Naive thymus-derived CD4-positive, alpha-beta T cell (primary cell): ENCODE measurements at regions of chr19 and their contacts with region 1.

Region 1: DNA sequence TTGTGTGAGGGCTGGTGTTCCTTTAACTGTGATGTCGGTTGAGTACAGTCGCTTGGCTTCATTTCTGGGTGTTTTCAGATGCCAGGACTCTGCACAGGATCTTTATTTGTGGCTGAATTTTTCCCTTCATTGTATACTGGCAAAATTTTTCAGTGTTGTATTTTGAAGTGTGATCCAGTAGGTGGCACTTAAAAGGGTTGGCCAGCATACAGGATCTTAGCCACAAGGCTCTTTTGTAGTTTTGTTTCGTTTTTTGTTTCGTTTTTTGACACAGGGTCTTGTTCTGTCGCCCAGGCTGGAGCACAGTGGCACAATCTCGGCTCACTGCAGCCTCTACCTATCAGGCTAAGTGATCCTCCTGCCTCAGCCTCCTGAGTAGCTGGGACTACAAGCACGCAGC is 8.7 kb downstream of the FCAR start:
- DNase-seq: no peak
- ATAC-seq: peak; percentile 40
- H3K4me3 ChIP-seq: no peak overlapping the region
- H3K4me3 Mint-ChIP-seq: peak overlapping the region in 2 of 10 donors; percentile 36 to 68
- H3K27ac ChIP-seq: no peak overlapping the region
- H3K27ac Mint-ChIP-seq: peak overlapping the region in 2 of 9 donors; percentile 51 to 82
- H3K4me1 ChIP-seq: no peaks in the 10 kb centered on the region
- H3K4me1 Mint-ChIP-seq: peaks cover 0 to 11% (median 0%) of the 10 kb centered on the region in 7 donors
- H3K27me3 ChIP-seq: no peaks in the 10 kb centered on the region
- H3K27me3 Mint-ChIP-seq: peaks cover 12 to 51% (median 35%) of the 10 kb centered on the region in 5 donors

Region 2: GRCh38 chr19:54918499-54918898 is 35.7 kb after region 1 on chr19:
- CTCF ChIA-PET with region 1: no interaction called
- POLR2A ChIA-PET with region 1: no interaction called
- intact Hi-C with region 1: loop called in 1 of 2 experiments (anchors 2 kb)
- DNase-seq: no peak
- ATAC-seq: no peak
- H3K4me3 ChIP-seq: no peak overlapping the region
- H3K4me3 Mint-ChIP-seq: no peak overlapping the region
- H3K27ac ChIP-seq: no peak overlapping the region
- H3K27ac Mint-ChIP-seq: no peak overlapping the region
- H3K4me1 ChIP-seq: no peaks in the 10 kb centered on the region
- H3K4me1 Mint-ChIP-seq: peaks cover 0 to 10% (median 5%) of the 10 kb centered on the region in 7 donors
- H3K27me3 ChIP-seq: no peaks in the 10 kb centered on the region
- H3K27me3 Mint-ChIP-seq: peaks cover 0 to 38% (median 10%) of the 10 kb centered on the region in 5 donors

Region 3: DNA sequence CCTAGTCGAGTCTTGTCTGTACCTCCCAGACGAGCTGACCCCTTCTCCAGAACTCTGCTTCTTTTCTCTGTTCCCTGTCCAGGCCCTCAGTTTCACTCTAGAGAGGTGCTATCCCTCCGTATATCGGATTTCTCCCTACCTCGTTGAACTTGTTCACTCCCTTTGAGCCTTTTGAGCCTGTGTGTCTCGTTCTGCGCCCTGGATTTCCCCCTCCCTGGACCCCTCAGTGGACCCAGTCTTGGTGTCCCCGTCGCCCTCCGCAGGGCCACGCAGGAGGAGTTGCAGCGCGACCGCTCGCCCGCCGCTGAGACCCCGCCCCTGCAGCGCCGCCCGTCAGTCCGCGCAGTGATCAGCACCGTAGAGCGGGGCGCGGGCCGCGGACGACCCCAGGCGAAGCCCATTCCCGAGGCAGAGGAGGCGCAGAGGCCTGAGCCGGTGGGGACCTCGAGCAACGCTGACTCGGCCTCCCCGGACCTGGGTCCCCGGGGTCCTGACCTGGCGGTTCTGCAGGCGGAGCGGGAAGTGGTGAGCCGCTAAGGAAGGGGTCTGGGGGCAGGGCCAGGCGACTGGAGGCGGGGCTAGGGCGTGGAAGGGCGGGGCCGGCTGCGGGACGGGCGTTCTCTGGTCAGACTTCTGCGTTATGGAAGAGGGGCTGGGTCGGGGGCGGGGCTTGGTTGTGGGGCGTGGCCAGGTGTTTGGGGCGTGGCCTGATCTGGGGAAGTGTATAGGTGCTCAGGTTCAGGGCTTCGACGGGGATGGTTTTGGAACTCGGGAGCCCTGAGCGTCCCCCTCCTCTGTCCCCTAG is 198.4 kb after region 1 on chr19:
- CTCF ChIA-PET with region 1: no interaction called
- POLR2A ChIA-PET with region 1: no interaction called
- intact Hi-C with region 1: loop called in 1 of 2 experiments (anchors 5 kb)
- DNase-seq: peak; percentile 70 to 96 (median 79)
- ATAC-seq: peak; percentile 93
- H3K4me3 ChIP-seq: peak overlapping the region; percentile 53
- H3K4me3 Mint-ChIP-seq: peak overlapping the region; percentile 78 to 92 (median 86)
- H3K27ac ChIP-seq: peak overlapping the region; percentile 2
- H3K27ac Mint-ChIP-seq: peak overlapping the region in 6 of 9 donors; percentile 56 to 96 (median 66)
- H3K4me1 ChIP-seq: peaks cover 10 to 15% of the 10 kb centered on the region in 2 donors
- H3K4me1 Mint-ChIP-seq: peaks cover 12 to 30% (median 20%) of the 10 kb centered on the region in 7 donors
- H3K27me3 ChIP-seq: peaks cover 0 to 12% of the 10 kb centered on the region in 2 donors
- H3K27me3 Mint-ChIP-seq: peaks cover 38 to 47% (median 46%) of the 10 kb centered on the region in 5 donors

Region 4: DNA sequence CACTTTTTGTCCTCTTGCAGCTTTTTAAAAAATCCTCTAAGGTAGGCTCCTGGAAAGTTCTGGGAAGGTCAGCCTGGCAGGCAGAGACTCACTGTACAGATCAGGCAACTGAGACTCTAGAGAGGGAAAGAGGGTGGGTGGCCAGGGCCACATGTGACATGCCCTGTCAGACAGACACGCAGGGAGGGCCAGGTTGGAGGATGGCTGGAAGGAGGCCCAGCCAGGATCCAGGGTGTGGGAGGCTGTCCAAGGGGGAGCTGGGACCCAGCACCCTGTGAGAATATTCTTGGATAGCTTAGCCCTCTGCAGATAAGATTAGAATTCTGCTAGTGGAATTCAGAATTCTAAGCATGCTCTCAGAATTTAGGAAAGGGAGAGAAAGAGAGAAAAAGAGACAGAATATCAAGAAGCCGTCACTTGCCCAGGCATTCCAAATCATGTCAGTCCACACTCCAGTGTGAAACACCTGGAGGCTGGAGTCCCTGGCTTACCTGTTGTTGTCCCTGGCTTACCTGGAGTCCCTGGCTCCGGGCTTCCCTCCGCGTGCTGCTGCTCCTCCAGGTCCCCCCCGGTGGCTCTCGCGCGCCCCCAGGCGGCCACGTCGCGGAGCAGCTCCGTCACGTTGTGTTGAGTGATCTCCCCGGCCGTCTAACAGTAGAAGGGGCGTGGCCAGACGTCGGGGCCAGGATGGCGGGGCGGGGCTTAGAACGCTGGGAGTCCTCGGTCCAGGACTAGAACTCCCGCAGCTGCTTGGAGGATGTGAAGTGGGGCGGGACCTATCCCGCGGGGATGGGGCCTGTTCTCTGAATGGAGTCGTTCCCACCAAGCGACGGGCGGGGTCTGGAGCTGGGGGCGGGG is 277.6 kb after region 1 on chr19:
- CTCF ChIA-PET with region 1: no interaction called
- POLR2A ChIA-PET with region 1: no interaction called
- intact Hi-C with region 1: loop called in 1 of 2 experiments (anchors 1 kb)
- DNase-seq: peak; percentile 79 to 92 (median 85)
- ATAC-seq: peak; percentile 98
- H3K4me3 ChIP-seq: no peak overlapping the region
- H3K4me3 Mint-ChIP-seq: peak overlapping the region in 4 of 10 donors; percentile 21 to 66 (median 50)
- H3K27ac ChIP-seq: no peak overlapping the region
- H3K27ac Mint-ChIP-seq: peak overlapping the region in 3 of 9 donors; percentile 17 to 50 (median 18)
- H3K4me1 ChIP-seq: peaks cover 0 to 7% of the 10 kb centered on the region in 2 donors
- H3K4me1 Mint-ChIP-seq: peaks cover 0 to 16% (median 8%) of the 10 kb centered on the region in 7 donors
- H3K27me3 ChIP-seq: peaks cover 0 to 10% of the 10 kb centered on the region in 2 donors
- H3K27me3 Mint-ChIP-seq: peaks cover 25 to 56% (median 41%) of the 10 kb centered on the region in 5 donors

Region 5: GRCh38 chr19:55418185-55418584 is 535.4 kb after region 1 on chr19:
- CTCF ChIA-PET with region 1: no interaction called
- POLR2A ChIA-PET with region 1: no interaction called
- intact Hi-C with region 1: loop called in 1 of 2 experiments (anchors 10 kb)
- DNase-seq: peak in 8 of 9 donors; percentile 34 to 72 (median 58)
- ATAC-seq: peak; percentile 82
- H3K4me3 ChIP-seq: no peak overlapping the region
- H3K4me3 Mint-ChIP-seq: peak overlapping the region in 2 of 10 donors; percentile 30 to 41
- H3K27ac ChIP-seq: no peak overlapping the region
- H3K27ac Mint-ChIP-seq: peak overlapping the region in 4 of 9 donors; percentile 7 to 90 (median 31)
- H3K4me1 ChIP-seq: peaks cover 16 to 29% of the 10 kb centered on the region in 2 donors
- H3K4me1 Mint-ChIP-seq: peaks cover 7 to 36% (median 23%) of the 10 kb centered on the region in 7 donors
- H3K27me3 ChIP-seq: no peaks in the 10 kb centered on the region
- H3K27me3 Mint-ChIP-seq: peaks cover 0 to 24% (median 0%) of the 10 kb centered on the region in 5 donors